Pancreas (tissue), 10 donors: ENCODE measurements at regions of chr6 and their contacts with region 1.

Region 1: GRCh38 chr6:49625140-49625539 is 11.5 kb downstream of the RHAG start:
- DNase-seq: no peak
- ATAC-seq: no peak
- H3K4me3 ChIP-seq: no peak overlapping the region
- H3K27ac ChIP-seq: no peak overlapping the region
- H3K4me1 ChIP-seq: no peaks in the 10 kb centered on the region
- H3K27me3 ChIP-seq: no peaks in the 10 kb centered on the region
- CTCF ChIP-seq: no peak

Region 2: DNA sequence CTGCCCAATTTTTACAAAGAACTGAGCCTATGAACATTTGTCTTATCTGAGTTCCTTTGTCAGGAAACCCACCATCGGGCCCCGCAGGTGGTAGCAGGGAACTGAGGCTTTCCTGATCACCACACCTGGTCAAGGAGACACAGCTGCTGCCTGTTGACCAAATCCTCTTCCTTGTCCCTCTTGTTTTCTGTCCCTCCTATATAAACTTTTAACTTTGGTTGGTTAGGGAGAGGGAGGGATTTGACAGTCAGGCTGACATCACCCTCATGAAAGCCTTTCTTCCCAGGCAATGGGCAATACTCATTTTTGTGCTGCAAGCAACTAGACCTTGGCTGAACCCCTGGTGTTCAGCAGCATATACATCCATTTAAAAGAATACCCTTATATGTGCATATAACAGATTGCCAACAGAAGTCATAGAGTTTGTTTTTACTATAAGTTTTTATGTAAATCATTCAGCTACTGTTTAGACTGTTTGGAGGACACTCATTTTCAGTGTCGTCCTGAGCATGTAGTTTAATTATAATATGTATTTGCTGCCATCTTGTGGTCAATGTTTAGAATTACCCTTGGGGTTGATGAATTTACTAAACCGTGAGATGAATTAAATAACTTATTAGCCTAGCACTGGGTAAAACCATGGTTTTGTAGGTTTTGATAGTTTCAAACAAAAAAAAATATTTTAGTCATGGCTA is 224.2 kb after region 1 on chr6:
- intact Hi-C with region 1: loop called (anchors 5 to 10 kb)
- DNase-seq: no peak
- ATAC-seq: peak in 3 of 4 donors; percentile 78 to 92 (median 86)
- H3K4me3 ChIP-seq: no peak overlapping the region
- H3K27ac ChIP-seq: no peak overlapping the region
- H3K4me1 ChIP-seq: no peaks in the 10 kb centered on the region
- H3K27me3 ChIP-seq: no peaks in the 10 kb centered on the region
- CTCF ChIP-seq: peak; percentile 43 to 69 (median 53)

Region 3: GRCh38 chr6:49856282-49856681 is 231.1 kb after region 1 on chr6:
- intact Hi-C with region 1: loop called in 1 of 3 experiments (anchors 10 kb)
- DNase-seq: no peak
- ATAC-seq: no peak
- H3K4me3 ChIP-seq: no peak overlapping the region
- H3K27ac ChIP-seq: no peak overlapping the region
- H3K4me1 ChIP-seq: no peaks in the 10 kb centered on the region
- H3K27me3 ChIP-seq: no peaks in the 10 kb centered on the region
- CTCF ChIP-seq: no peak